Activated T-helper 1 cell treated with anti-CD3 and anti-CD28 coated beads, Interleukin-12 subunit alpha, Interleukin-12 subunit beta, Interleukin-2, Interleukin-4 antibody, amounts not matched to agents 30 ng/mL and 10 ng/mL and 1 ng/mL, durations not matched to agents 14 hours and 24 hours and 36 hours (primary cell): ENCODE measurements at regions of chr2 and their contacts with region 1.

Region 1: GRCh38 chr2:144357623-144358373 is 162.1 kb downstream of the ZEB2 start:
- DNase-seq: peak; percentile 13
- H3K4me3 Mint-ChIP-seq: no peak overlapping the region
- H3K27ac Mint-ChIP-seq: peak overlapping the region; percentile 71
- H3K4me1 Mint-ChIP-seq: peaks cover 30% of the 10 kb centered on the region
- H3K27me3 Mint-ChIP-seq: no peaks in the 10 kb centered on the region

Region 2: GRCh38 chr2:144382849-144383248 is 25.1 kb after region 1 on chr2:
- intact Hi-C with region 1: loop called (anchors 1 kb)
- DNase-seq: peak; percentile 13
- H3K4me3 Mint-ChIP-seq: no peak overlapping the region
- H3K27ac Mint-ChIP-seq: peak overlapping the region; percentile 32
- H3K4me1 Mint-ChIP-seq: peaks cover 44% of the 10 kb centered on the region
- H3K27me3 Mint-ChIP-seq: peaks cover 8% of the 10 kb centered on the region

Region 3: GRCh38 chr2:144456680-144457079 is 98.9 kb after region 1 on chr2:
- intact Hi-C with region 1: loop called (anchors 2 kb)
- DNase-seq: no peak
- H3K4me3 Mint-ChIP-seq: no peak overlapping the region
- H3K27ac Mint-ChIP-seq: no peak overlapping the region
- H3K4me1 Mint-ChIP-seq: peaks cover 78% of the 10 kb centered on the region
- H3K27me3 Mint-ChIP-seq: peaks cover 13% of the 10 kb centered on the region

Region 4: GRCh38 chr2:144471305-144472045 is 113.7 kb after region 1 on chr2:
- intact Hi-C with region 1: loop called (anchors 2 kb)
- DNase-seq: no peak
- H3K4me3 Mint-ChIP-seq: no peak overlapping the region
- H3K27ac Mint-ChIP-seq: peak overlapping the region; percentile 15
- H3K4me1 Mint-ChIP-seq: peaks cover 20% of the 10 kb centered on the region
- H3K27me3 Mint-ChIP-seq: no peaks in the 10 kb centered on the region